ENCODE measurements at regions of chr15 and their contacts with region 1.

Region 1: DNA sequence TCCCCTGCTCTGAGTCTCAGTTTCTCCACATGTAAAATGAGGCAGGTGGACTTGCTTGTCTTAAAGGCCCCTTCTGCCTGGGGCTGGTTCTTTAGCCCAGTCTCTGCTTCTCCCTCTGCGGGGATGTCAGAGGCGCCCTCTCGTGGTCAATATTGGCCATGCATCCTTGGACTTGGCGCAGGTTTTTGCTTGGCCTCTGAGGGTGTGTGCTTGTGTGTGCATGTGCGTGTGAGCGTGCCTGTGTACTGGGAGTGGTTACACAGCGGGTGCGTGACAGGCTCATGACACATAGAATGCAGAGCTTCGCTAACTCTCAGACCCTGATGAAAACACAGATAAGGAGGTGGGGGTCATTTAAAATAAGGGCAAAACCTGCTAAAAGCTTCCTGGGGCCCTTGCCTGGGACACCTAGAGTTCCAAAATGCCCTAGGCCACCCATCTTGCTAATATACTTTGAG is 160.9 kb downstream of the SMAD6 start:
- DNase-seq: peak; percentile 87
- ATAC-seq: peak; percentile 94
- H3K4me3 ChIP-seq: no peak overlapping the region
- H3K27ac ChIP-seq: no peak overlapping the region
- H3K4me1 ChIP-seq: peaks cover 7% of the 10 kb centered on the region
- H3K27me3 ChIP-seq: no peaks in the 10 kb centered on the region
- CTCF ChIP-seq: peak; percentile 90
- POLR2A ChIP-seq: no peak
- RAD21 ChIP-seq: peak; percentile 89

Region 2: GRCh38 chr15:66611257-66612053 is 251.5 kb before region 1 on chr15:
- CTCF ChIA-PET with region 1: no interaction called
- POLR2A ChIA-PET with region 1: no interaction called
- dilution Hi-C with region 1: no loop called
- in situ Hi-C with region 1: loop called (anchors 5 kb)
- intact Hi-C with region 1: no loop called
- DNase-seq: no peak
- ATAC-seq: peak; percentile 35
- H3K4me3 ChIP-seq: no peak overlapping the region
- H3K27ac ChIP-seq: no peak overlapping the region
- H3K4me1 ChIP-seq: no peaks in the 10 kb centered on the region
- H3K27me3 ChIP-seq: peaks cover 5% of the 10 kb centered on the region; the same call in 1 of the 2 replicates
- CTCF ChIP-seq: no peak
- POLR2A ChIP-seq: no peak
- RAD21 ChIP-seq: no peak

Region 3: GRCh38 chr15:66901336-66902100 is 38.6 kb after region 1 on chr15:
- CTCF ChIA-PET with region 1: no interaction called
- POLR2A ChIA-PET with region 1: no interaction called
- dilution Hi-C with region 1: no loop called
- in situ Hi-C with region 1: no loop called
- intact Hi-C with region 1: loop called (anchors 2 kb)
- DNase-seq: peak; percentile 68
- ATAC-seq: peak; percentile 62
- H3K4me3 ChIP-seq: no peak overlapping the region
- H3K27ac ChIP-seq: no peak overlapping the region
- H3K4me1 ChIP-seq: peaks cover 6% of the 10 kb centered on the region; the same call in 1 of the 2 replicates
- H3K27me3 ChIP-seq: no peaks in the 10 kb centered on the region
- CTCF ChIP-seq: no peak
- POLR2A ChIP-seq: no peak
- RAD21 ChIP-seq: no peak

Measured in IMR-90 (cell line).